ENCODE measurements at regions of chr15 and their contacts with region 1.

Region 1: GRCh38 chr15:46293550-46293949 is 658.7 kb downstream of the SQOR start:
- DNase-seq: no peak
- H3K4me3 Mint-ChIP-seq: no peak overlapping the region
- H3K27ac Mint-ChIP-seq: no peak overlapping the region
- H3K4me1 Mint-ChIP-seq: peaks cover 2% of the 10 kb centered on the region
- H3K27me3 Mint-ChIP-seq: no peaks in the 10 kb centered on the region
- CTCF ChIP-seq: no peak

Region 2: GRCh38 chr15:45714590-45715488 is 578.7 kb before region 1 on chr15:
- CTCF ChIA-PET with region 1: interaction called, 3 read pairs
- POLR2A ChIA-PET with region 1: no interaction called
- intact Hi-C with region 1: loop called (anchors 5 kb)
- DNase-seq: peak; percentile 75
- H3K4me3 Mint-ChIP-seq: no peak overlapping the region
- H3K27ac Mint-ChIP-seq: no peak overlapping the region
- H3K4me1 Mint-ChIP-seq: peaks cover 8% of the 10 kb centered on the region
- H3K27me3 Mint-ChIP-seq: peaks cover 24% of the 10 kb centered on the region
- CTCF ChIP-seq: peak; percentile 95

Measured in MCF 10A (cell line).